ENCODE measurements at regions of chr4 and their contacts with region 1.

Region 1: DNA sequence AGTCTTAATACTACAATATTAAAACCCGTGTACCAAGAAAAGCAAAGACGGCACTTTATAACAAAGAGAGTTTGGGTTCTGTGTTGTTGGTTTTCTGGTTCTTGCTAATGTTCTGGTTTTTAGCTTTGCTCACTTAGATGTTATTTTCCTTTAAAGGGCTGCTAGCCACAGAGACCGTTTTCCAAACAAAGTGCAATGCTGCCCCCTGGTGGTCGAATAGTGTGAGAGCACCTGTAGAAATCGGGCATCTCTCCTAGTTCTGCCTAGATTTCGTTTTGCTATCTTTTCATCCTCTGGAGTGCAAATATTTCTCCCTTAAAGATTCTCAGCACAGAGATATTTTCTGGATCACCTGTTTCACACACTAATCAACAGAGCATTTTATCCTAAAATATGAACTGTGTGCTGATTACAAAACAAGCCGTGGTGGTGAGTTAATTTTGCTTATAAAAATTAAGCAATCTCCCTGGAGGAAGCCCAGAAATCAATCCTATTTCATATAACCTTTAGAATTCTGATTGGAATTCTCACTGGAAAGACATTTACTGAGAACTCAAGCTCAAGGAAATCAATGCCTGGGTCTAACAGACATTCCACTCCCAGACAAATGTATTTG is 334.5 kb upstream of the NOCT start:
- DNase-seq: no peak
- H3K4me3 ChIP-seq: no peak overlapping the region
- H3K27me3 ChIP-seq: peaks cover 4% of the 10 kb centered on the region
- CTCF ChIP-seq: peak; percentile 80

Region 2: DNA sequence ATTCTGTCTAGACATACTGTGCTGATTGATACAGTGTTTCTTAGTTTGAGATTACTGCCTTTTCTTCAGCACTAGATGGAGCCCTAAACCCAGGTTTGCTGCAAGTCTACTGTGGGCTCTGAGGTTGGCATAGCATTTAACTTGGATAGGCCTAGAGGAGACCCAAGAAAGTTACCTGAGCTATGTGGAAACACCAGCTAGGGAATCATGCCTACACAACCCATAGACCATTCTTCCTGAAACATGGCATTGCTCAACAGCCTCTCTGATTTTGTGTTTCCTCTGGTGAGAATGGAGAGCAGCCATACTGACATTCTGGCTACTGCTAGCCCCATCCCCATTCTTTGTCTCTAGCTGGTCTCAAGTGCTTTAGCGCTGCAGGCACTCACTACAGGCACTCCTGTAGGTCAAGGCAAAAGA is 861.1 kb before region 1 on chr4:
- CTCF ChIA-PET with region 1: interaction called, 22 read pairs
- POLR2A ChIA-PET with region 1: no interaction called
- DNase-seq: no peak
- H3K4me3 ChIP-seq: no peak overlapping the region
- H3K27me3 ChIP-seq: no peaks in the 10 kb centered on the region
- CTCF ChIP-seq: peak; percentile 71

Region 3: DNA sequence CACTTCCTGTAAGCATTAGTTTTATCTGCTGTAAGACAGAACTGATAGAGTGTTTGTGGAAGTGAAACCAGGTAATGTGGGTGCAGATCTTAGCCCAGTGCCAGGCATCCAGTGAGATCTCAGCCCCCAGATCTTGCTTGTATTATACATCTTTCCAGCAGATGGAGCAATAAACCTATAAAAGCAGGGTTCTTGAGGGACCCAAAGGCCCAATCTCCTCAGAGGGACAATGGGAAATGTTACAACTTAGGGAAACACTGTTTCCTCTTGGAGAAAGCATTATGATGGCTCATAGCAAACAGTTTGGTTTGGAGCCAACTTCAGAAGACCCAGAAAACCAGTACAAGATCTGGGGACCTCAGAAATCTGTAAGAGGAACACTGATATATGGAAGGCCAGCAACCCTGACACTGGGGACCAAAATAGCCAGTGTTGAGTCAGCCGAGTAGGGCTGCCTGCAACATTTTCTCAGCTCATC is 645.3 kb before region 1 on chr4:
- CTCF ChIA-PET with region 1: interaction called, 34 read pairs
- POLR2A ChIA-PET with region 1: no interaction called
- DNase-seq: no peak
- H3K4me3 ChIP-seq: no peak overlapping the region
- H3K27me3 ChIP-seq: no peaks in the 10 kb centered on the region
- CTCF ChIP-seq: peak; percentile 56

Region 4: DNA sequence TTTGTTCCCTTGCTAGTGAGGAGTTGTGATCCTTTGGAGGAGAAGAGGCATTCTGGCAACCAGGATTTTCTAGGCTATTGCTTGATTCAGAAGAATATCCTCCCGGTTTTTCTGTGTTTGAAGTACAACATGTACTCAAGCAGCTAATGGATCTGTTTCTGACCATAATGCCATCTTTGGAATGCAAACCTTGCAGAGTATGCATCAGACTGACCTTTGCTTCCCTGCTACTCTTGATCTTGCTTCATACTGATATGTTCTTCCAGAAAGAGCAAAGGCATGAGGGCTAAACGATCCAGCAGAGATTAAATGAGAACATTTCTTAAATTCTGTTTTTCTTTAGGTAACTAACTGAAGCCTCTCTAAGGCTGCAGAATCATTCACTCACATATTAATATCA is 173.6 kb before region 1 on chr4:
- CTCF ChIA-PET with region 1: no interaction called
- POLR2A ChIA-PET with region 1: no interaction called
- DNase-seq: no peak
- H3K4me3 ChIP-seq: no peak overlapping the region
- H3K27me3 ChIP-seq: no peaks in the 10 kb centered on the region
- CTCF ChIP-seq: no peak

Region 5: DNA sequence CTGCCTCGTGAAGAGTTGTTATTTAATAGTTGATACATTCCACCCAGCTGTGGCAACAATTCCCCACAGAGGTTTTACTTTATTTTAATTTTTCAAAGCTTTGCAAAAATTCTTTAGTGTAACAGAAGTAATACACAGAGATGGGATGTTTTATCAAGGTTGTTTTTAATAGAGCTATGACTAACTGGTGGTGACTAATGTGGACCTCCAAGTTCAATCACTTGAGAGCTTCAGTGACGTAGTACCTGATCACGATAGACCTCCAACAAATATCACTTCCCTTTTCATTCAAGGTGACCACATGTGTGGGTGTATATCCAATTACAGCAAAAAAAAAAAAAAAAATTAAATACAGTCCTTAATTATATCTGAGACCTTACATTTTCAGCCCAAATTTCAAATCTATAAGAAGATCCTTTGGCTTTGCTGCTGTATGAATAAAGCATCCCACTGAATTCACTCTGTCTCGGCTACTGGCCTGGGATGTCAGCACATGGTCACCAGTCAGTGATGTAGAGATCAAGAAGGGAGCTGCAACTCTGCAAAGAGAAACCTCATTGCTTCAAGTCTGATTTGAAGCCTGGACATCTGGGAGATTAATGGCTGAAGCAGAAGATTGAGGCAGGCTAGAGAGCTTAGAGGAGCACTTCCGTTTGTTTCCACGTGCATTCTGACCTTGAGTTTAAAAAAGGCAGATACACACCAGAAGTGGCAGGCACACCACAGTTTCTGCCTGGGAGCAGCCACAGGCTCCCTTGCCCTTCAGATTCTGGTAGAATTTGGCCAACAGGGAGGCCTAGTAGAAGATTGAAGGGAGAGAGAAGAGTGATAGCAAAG is 11.4 kb before region 1 on chr4:
- CTCF ChIA-PET with region 1: interaction called, 29 read pairs
- POLR2A ChIA-PET with region 1: no interaction called
- DNase-seq: no peak
- H3K4me3 ChIP-seq: no peak overlapping the region
- H3K27me3 ChIP-seq: no peaks in the 10 kb centered on the region
- CTCF ChIP-seq: no peak

Region 6: GRCh38 chr4:138772366-138772765 is 91.3 kb after region 1 on chr4:
- CTCF ChIA-PET with region 1: no interaction called
- POLR2A ChIA-PET with region 1: no interaction called
- DNase-seq: no peak
- H3K4me3 ChIP-seq: no peak overlapping the region
- H3K27me3 ChIP-seq: peaks cover 4% of the 10 kb centered on the region; the same call in 1 of the 2 replicates
- CTCF ChIP-seq: no peak

Region 7: GRCh38 chr4:138870737-138871554 is 189.8 kb after region 1 on chr4:
- CTCF ChIA-PET with region 1: interaction called, 32 read pairs
- POLR2A ChIA-PET with region 1: no interaction called
- DNase-seq: no peak
- H3K4me3 ChIP-seq: no peak overlapping the region
- H3K27me3 ChIP-seq: peaks cover 18% of the 10 kb centered on the region
- CTCF ChIP-seq: peak; percentile 78

Region 8: GRCh38 chr4:139153420-139154133 is 472.5 kb after region 1 on chr4:
- CTCF ChIA-PET with region 1: no interaction called
- POLR2A ChIA-PET with region 1: no interaction called
- DNase-seq: no peak
- H3K4me3 ChIP-seq: no peak overlapping the region
- H3K27me3 ChIP-seq: no peaks in the 10 kb centered on the region
- CTCF ChIP-seq: no peak

Measured in BJ (cell line).